ENCODE measurements at regions of chr1 and their contacts with region 1.

Region 1: DNA sequence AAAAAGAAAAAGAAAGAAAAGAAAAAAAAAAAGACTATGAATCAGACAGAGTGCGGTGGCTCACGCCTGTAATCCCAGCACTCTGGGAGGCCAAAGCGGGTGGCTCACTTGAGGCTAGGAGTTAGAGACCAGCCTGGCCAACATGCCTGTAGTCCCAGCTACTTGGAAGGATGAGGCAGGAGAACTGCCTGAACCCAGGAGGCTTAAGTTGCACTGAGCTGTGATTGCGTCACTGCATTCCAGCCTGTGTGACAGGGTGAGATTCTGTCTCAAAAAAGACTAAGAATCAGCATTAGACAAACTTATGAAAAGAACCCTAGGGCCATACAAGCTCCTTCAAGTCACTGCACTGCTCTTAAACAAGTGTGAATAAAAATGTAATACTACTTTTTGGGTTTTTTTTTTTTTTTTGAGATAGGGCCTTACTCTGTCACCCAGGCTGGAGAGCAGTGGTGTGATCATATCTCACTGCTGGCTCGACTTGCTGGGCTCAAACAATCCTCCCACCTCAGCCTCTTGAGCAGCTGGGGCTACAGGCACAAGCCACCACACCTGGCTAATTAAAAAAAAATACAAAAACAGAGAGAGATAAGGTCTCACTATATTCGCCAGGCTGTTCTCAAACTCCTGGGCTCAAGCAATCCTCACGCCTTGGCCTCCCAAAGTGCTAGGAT is 17.0 kb downstream of the PSMB4 start:
- DNase-seq: peak; percentile 44
- H3K4me3 Mint-ChIP-seq: no peak overlapping the region
- H3K27ac Mint-ChIP-seq: no peak overlapping the region
- H3K4me1 Mint-ChIP-seq: no peaks in the 10 kb centered on the region
- H3K27me3 Mint-ChIP-seq: no peaks in the 10 kb centered on the region
- CTCF ChIP-seq: no peak

Region 2: DNA sequence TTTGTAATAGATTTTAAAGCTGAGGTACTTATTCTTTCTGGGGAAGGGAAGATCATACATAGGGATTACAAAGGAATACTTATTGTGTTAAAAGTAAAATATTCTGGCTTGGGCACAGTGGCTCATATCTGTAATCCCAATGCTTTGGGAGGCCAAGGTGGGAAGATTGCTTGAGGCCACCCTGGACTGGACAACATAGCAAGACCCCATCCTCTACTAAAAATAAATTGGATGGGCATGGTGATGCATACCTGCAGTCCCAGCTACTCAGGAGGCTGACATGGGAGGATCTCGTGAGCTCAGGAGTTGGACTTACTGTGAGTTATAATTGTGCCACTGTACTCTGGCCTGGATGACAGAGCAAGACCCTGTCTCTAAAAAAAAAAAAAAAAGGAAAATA is 318.2 kb before region 1 on chr1:
- CTCF ChIA-PET with region 1: no interaction called
- POLR2A ChIA-PET with region 1: no interaction called
- intact Hi-C with region 1: no loop called
- DNase-seq: no peak
- H3K4me3 Mint-ChIP-seq: no peak overlapping the region
- H3K27ac Mint-ChIP-seq: no peak overlapping the region
- H3K4me1 Mint-ChIP-seq: peaks cover 10% of the 10 kb centered on the region
- H3K27me3 Mint-ChIP-seq: no peaks in the 10 kb centered on the region
- CTCF ChIP-seq: no peak

Region 3: DNA sequence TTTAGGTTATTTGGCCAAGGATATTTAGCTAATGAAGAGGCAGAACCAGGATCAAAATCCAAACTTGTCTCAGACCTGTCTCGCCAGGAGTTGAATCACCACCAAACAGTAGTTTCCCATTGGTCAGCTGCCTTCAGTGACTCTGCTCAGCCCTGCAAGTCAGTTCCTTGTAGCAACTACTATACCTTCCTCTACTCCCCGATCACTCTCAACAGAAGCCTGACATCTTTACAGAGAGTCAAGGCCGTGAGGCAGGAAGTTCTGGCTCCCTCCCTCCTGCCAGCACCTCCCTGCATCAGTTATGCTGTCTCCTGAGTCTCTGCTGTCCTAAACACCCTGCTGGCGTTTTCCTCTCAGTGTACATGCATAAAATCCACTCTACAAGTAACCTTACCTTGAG is 148.6 kb before region 1 on chr1:
- CTCF ChIA-PET with region 1: no interaction called
- POLR2A ChIA-PET with region 1: no interaction called
- intact Hi-C with region 1: no loop called
- DNase-seq: no peak
- H3K4me3 Mint-ChIP-seq: no peak overlapping the region
- H3K27ac Mint-ChIP-seq: no peak overlapping the region
- H3K4me1 Mint-ChIP-seq: no peaks in the 10 kb centered on the region
- H3K27me3 Mint-ChIP-seq: no peaks in the 10 kb centered on the region
- CTCF ChIP-seq: no peak

Region 4: DNA sequence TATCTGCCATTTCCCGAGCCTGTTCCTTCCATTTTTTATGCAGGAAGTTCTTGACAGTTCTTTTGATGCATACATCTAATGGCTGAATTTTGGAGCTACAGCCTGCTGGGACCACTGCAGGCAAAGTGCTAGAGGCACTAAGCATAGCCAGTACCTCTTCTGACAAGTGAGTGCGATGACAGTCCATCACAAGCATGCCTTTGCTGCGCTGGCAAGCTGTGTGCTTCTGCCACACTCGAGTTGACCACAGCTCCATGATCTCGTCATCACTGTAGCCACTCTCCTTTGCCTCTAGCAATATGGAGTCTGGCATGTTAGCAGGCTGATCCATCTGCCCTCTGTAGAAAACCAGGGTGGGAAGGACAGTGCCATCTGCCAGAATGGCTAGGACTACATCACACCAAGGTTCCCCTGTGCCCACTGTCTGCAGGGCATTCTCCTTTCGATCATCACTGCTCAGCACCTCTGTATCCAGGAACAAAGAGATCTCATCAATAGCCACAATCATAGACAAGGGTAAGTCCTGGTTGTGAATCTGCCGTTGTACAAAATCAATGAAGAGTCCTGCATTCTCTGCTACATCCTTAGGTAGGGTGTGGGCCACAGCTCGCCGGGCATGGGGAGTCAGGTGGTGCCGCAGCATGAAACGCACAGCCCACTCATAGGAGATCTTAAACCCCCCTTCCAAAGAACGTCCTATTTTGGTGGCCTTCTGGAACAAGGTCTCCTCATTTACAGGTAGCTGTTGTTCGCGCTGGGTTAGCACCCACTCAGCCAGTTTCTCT is 11.0 kb before region 1 on chr1:
- CTCF ChIA-PET with region 1: interaction called, 11 read pairs
- POLR2A ChIA-PET with region 1: interaction called, 46 read pairs
- intact Hi-C with region 1: no loop called
- DNase-seq: no peak
- H3K4me3 Mint-ChIP-seq: no peak overlapping the region
- H3K27ac Mint-ChIP-seq: no peak overlapping the region
- H3K4me1 Mint-ChIP-seq: peaks cover 19% of the 10 kb centered on the region
- H3K27me3 Mint-ChIP-seq: no peaks in the 10 kb centered on the region
- CTCF ChIP-seq: no peak

Measured in MCF 10A (cell line).